Activated CD4-positive, alpha-beta T cell treated with anti-CD3 and anti-CD28 coated beads, Interleukin-2, amount 10 ng/mL, durations not matched to agents 24 days and 14 days (primary cell): ENCODE measurements at regions of chr7 and their contacts with region 1.

Region 1: GRCh38 chr7:32495298-32496176 is at the start of gene AVL9:
- DNase-seq: peak; percentile 100
- H3K4me3 Mint-ChIP-seq: peak within 1 kb of the TSS; percentile 86
- H3K27ac Mint-ChIP-seq: peak within 1 kb of the TSS; percentile 98
- H3K4me1 Mint-ChIP-seq: peaks cover 27% of the 10 kb centered on the region
- H3K27me3 Mint-ChIP-seq: no peaks in the 10 kb centered on the region
- total RNA-seq, gene AVL9: 44.6 and 49.1 TPM in 2 replicates

Region 2: DNA sequence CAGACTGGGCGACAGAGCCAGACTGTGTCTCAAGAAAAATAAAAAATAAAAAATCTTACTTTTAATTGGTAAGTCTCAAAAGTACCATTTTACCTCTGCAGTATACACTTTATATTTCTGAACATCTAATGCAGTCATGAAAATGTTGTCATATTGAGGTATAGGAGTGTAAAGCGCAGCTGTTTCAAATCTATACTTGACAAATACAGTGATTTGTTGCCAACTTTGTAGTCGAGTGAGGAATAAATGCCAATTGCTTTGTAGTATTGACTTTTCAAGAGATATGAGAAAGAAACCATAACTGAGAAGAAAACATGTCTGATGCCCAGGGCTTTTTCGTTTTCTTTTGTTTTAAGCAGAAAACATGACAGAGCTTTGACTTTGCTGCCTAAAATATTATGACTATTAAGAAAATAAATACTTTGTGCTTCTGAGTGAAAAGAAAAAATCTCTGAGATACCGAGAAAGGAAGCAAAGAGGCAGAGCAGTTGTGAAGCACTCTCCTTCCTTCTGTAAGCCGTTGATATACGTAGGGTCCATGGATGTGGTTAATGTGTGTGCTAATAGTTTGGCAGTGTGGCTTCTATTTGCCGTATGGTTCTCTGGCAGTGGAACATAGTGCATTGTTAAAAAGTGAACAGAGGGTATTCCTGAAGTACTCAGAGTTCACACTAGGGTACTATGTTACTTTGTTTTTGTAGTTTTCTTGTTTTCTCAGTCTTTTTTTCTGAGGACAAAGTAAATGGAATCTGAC is 37.9 kb after region 1 on chr7:
- intact Hi-C with region 1: loop called (anchors 5 kb)
- DNase-seq: no peak
- H3K4me3 Mint-ChIP-seq: no peak overlapping the region
- H3K27ac Mint-ChIP-seq: no peak overlapping the region
- H3K4me1 Mint-ChIP-seq: peaks cover 2% of the 10 kb centered on the region
- H3K27me3 Mint-ChIP-seq: no peaks in the 10 kb centered on the region

Region 3: GRCh38 chr7:32611201-32612099 is 115.9 kb after region 1 on chr7:
- intact Hi-C with region 1: no loop called
- DNase-seq: no peak
- H3K4me3 Mint-ChIP-seq: no peak overlapping the region
- H3K27ac Mint-ChIP-seq: no peak overlapping the region
- H3K4me1 Mint-ChIP-seq: no peaks in the 10 kb centered on the region
- H3K27me3 Mint-ChIP-seq: no peaks in the 10 kb centered on the region